Activated naive CD4-positive, alpha-beta T cell treated with anti-CD3 and anti-CD28 coated beads for 36 hours (primary cell): ENCODE measurements at regions of chr6 and their contacts with region 1.

Region 1: DNA sequence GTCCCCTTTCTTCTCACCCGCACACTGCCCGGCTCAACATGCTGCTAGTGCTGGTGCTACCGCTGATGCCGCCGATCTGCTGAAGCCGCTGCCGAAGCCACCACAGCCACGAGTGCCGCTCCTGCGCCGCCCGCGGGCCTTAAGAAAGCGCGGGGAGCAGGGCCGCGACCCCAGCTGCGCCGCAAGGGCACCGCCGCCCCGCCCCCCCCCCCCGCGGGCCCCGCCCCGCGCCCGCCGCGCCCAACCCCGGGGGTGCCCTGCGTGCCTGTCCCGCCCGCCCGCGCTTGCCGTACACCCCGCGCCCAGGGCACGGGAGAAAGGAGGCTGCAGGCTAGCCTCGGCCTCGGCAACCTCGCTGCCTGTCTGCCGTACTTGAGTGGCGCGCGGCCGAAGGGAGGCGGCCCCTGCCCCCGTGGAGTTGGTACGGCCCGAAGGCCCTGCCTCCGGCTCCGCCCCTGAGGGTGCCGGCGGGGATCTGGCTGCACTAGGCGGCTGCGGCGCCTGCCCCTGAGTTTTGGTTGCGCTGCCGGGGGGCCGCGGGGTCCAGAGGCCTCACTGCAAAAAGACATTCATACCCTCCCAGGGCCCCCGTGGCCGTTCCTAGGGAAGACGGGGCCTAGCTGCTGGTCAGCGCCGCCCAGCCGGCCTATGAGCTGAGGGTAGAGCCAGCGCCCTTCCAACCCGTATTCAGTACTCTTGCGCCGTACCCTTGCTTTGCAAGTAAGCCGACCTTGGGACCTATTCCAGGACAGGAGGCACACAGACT is at the start of gene SOD2:
- DNase-seq: peak; percentile 84
- H3K4me3 Mint-ChIP-seq: peak within 1 kb of the TSS; percentile 95
- H3K27ac Mint-ChIP-seq: peak within 1 kb of the TSS; percentile 96
- H3K4me1 Mint-ChIP-seq: peaks cover 35% of the 10 kb centered on the region
- H3K27me3 Mint-ChIP-seq: no peaks in the 10 kb centered on the region
- total RNA-seq, gene SOD2: 256 to 260 TPM

Region 2: GRCh38 chr6:158819213-158819909 is 874.0 kb before region 1 on chr6 and contains the start of gene EZR:
- CTCF ChIA-PET with region 1: no interaction called
- intact Hi-C with region 1: loop called (anchors 5 kb)
- DNase-seq: peak; percentile 87
- H3K4me3 Mint-ChIP-seq: peak within 1 kb of the TSS; percentile 97
- H3K27ac Mint-ChIP-seq: peak within 1 kb of the TSS; percentile 98
- H3K4me1 Mint-ChIP-seq: peaks cover 47% of the 10 kb centered on the region
- H3K27me3 Mint-ChIP-seq: no peaks in the 10 kb centered on the region
- total RNA-seq, gene EZR: 229 to 230 TPM

Region 3: GRCh38 chr6:159726918-159727716 is 33.8 kb after region 1 on chr6 and contains the start of gene WTAP:
- CTCF ChIA-PET with region 1: interaction called, 12 read pairs
- intact Hi-C with region 1: loop called (anchors 1 kb)
- DNase-seq: peak; percentile 98
- H3K4me3 Mint-ChIP-seq: peak within 1 kb of the TSS; percentile 91
- H3K27ac Mint-ChIP-seq: peak within 1 kb of the TSS; percentile 95
- H3K4me1 Mint-ChIP-seq: peaks cover 50% of the 10 kb centered on the region
- H3K27me3 Mint-ChIP-seq: no peaks in the 10 kb centered on the region
- total RNA-seq, gene WTAP: 87.5 to 91.6 TPM

Region 4: GRCh38 chr6:159852877-159853276 is 159.6 kb after region 1 on chr6:
- CTCF ChIA-PET with region 1: interaction called, 5 read pairs
- intact Hi-C with region 1: loop called (anchors 1 kb)
- DNase-seq: peak; percentile 31
- H3K4me3 Mint-ChIP-seq: no peak overlapping the region
- H3K27ac Mint-ChIP-seq: no peak overlapping the region
- H3K4me1 Mint-ChIP-seq: no peaks in the 10 kb centered on the region
- H3K27me3 Mint-ChIP-seq: no peaks in the 10 kb centered on the region

Region 5: GRCh38 chr6:159979136-159979874 is 286.0 kb after region 1 on chr6:
- CTCF ChIA-PET with region 1: no interaction called
- intact Hi-C with region 1: loop called (anchors 2 kb)
- DNase-seq: peak; percentile 87
- H3K4me3 Mint-ChIP-seq: peak overlapping the region; percentile 65
- H3K27ac Mint-ChIP-seq: peak overlapping the region; percentile 98
- H3K4me1 Mint-ChIP-seq: peaks cover 92% of the 10 kb centered on the region
- H3K27me3 Mint-ChIP-seq: no peaks in the 10 kb centered on the region

Region 6: GRCh38 chr6:160487116-160487515 is 793.8 kb after region 1 on chr6:
- CTCF ChIA-PET with region 1: no interaction called
- intact Hi-C with region 1: no loop called
- DNase-seq: no peak
- H3K4me3 Mint-ChIP-seq: no peak overlapping the region
- H3K27ac Mint-ChIP-seq: no peak overlapping the region
- H3K4me1 Mint-ChIP-seq: no peaks in the 10 kb centered on the region
- H3K27me3 Mint-ChIP-seq: no peaks in the 10 kb centered on the region

Region 7: GRCh38 chr6:160520043-160520904 is 827.0 kb after region 1 on chr6:
- CTCF ChIA-PET with region 1: no interaction called
- intact Hi-C with region 1: loop called (anchors 5 kb)
- DNase-seq: peak; percentile 45
- H3K4me3 Mint-ChIP-seq: peak overlapping the region; percentile 88
- H3K27ac Mint-ChIP-seq: peak overlapping the region; percentile 80
- H3K4me1 Mint-ChIP-seq: peaks cover 17% of the 10 kb centered on the region
- H3K27me3 Mint-ChIP-seq: no peaks in the 10 kb centered on the region